B cell (primary cell): ENCODE measurements at regions of chr9 and their contacts with region 1.

Region 1: DNA sequence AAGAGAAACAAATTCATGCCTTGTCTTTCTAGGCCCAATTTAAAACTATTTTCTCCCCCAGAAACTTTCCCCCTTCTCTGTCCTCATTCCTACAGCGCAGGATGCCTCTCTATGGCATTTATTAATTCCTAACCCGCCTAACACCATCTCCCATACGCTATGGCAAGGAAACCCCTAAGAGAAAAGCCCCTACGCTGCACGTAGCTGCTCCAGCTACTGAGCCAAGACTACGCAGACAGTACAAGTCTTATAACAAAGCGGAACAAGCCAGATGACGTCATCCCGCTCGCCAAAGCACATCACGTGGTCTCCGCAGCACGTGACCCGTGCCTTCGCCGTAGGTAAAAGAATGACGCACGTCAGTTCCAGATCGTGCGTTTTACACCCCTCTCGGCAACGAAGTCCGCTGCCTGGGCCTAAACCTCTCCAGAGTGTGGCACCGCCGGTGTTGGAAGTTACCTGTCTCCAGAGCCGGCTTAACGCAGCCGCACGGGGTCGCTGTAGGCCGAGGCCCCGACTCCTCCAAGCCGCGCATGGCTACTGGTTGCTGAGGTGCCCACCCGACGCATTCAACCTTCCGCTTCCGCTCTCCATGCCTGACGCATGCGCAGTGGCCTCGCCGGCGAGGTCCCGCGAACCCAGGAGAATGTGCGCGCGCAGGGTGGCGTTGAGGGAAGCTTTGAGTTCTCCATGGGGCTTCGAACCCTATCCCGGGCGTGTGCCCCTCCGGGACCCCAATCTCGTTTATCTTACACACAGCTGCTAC is at the start of gene TRMO:
- DNase-seq: peak; percentile 100
- ATAC-seq: peak; percentile 78
- H3K4me3 ChIP-seq: peak within 1 kb of the TSS; percentile 47 to 89 (median 77)
- H3K4me3 Mint-ChIP-seq: peak within 1 kb of the TSS; percentile 87
- H3K27ac ChIP-seq: peak within 1 kb of the TSS; percentile 98 to 99
- H3K27ac Mint-ChIP-seq: peak within 1 kb of the TSS; percentile 97
- H3K4me1 ChIP-seq: peaks cover 26 to 32% of the 10 kb centered on the region in 2 donors
- H3K4me1 Mint-ChIP-seq: peaks cover 54% of the 10 kb centered on the region
- H3K27me3 ChIP-seq: no peaks in the 10 kb centered on the region
- H3K27me3 Mint-ChIP-seq: no peaks in the 10 kb centered on the region
- CTCF ChIP-seq: peak; percentile 74
- total RNA-seq, gene TRMO: 40.2 and 42.3 TPM in 2 replicates

Region 2: GRCh38 chr9:97696803-97697601 is 225.1 kb before region 1 on chr9 and contains the start of gene XPA:
- CTCF ChIA-PET with region 1: interaction called, 3 read pairs
- POLR2A ChIA-PET with region 1: interaction called, 4 read pairs
- intact Hi-C with region 1: loop called (anchors 1 kb)
- DNase-seq: peak; percentile 97
- ATAC-seq: peak; percentile 92
- H3K4me3 ChIP-seq: peak within 1 kb of the TSS; percentile 67 to 84 (median 74)
- H3K4me3 Mint-ChIP-seq: peak within 1 kb of the TSS; percentile 91
- H3K27ac ChIP-seq: peak within 1 kb of the TSS; percentile 77 to 82
- H3K27ac Mint-ChIP-seq: peak within 1 kb of the TSS; percentile 94
- H3K4me1 ChIP-seq: peaks cover 30 to 40% of the 10 kb centered on the region in 2 donors
- H3K4me1 Mint-ChIP-seq: peaks cover 59% of the 10 kb centered on the region
- H3K27me3 ChIP-seq: no peaks in the 10 kb centered on the region
- H3K27me3 Mint-ChIP-seq: peaks cover 7% of the 10 kb centered on the region
- CTCF ChIP-seq: no peak
- total RNA-seq, gene XPA: 21.3 and 27.4 TPM in 2 replicates

Region 3: DNA sequence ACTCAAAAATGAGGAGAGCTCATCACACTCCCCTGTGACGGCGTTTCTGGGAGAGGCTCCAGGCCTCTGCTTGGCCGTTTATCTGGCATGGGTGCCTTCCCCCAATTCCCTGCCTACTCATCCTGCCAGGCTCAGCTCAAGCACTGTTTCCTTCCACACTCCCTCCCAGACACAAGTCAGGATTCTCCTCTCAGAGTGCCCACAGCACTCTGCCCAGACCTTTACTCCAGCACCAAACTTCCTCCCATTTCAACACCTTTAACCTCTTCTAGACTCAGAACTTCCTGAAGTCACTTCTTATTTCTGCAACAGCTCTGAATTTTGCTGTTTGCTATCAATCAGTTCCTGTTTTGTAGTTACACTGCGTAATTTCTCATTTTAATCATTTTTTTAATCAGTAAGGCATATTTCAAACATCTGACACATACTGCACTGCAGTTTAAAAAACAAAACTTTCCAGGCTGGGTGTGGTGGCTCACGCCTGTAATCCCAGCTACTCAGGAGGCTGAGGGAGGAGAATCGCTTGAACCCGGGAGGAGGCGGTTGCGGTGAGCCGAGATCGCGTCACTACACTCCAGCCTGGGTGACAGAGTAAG is 15.8 kb before region 1 on chr9:
- CTCF ChIA-PET with region 1: interaction called, 24 read pairs
- POLR2A ChIA-PET with region 1: no interaction called
- intact Hi-C with region 1: no loop called
- DNase-seq: peak; percentile 52
- ATAC-seq: peak; percentile 55
- H3K4me3 ChIP-seq: peak overlapping the region in 3 of 5 experiments; percentile 5 to 12 (median 8)
- H3K4me3 Mint-ChIP-seq: peak overlapping the region; percentile 82
- H3K27ac ChIP-seq: peak overlapping the region; percentile 59 to 64
- H3K27ac Mint-ChIP-seq: peak overlapping the region; percentile 91
- H3K4me1 ChIP-seq: peaks cover 20 to 32% of the 10 kb centered on the region in 2 donors
- H3K4me1 Mint-ChIP-seq: peaks cover 47% of the 10 kb centered on the region
- H3K27me3 ChIP-seq: no peaks in the 10 kb centered on the region
- H3K27me3 Mint-ChIP-seq: no peaks in the 10 kb centered on the region
- CTCF ChIP-seq: no peak

Region 4: DNA sequence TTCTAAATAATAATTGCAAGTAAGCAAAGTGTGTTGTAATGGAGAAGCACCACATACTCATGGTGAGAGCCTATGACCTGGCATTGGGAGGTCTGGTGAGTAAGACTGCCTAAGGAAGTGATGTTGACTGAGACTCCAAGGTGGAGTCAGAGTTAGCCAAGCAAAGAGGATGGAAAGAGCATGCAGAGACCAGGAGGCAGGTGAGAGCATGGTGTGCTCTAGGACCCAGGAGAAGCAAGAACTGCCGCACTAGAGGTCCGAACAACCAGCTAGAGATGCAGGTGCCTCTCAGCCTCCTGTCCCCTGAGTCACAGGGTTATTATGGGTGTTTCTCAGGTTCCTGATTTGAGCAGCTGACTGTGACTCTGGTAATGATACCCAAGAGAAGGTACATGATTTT is 88.3 kb after region 1 on chr9:
- CTCF ChIA-PET with region 1: interaction called, 6 read pairs
- POLR2A ChIA-PET with region 1: interaction called, 6 read pairs
- intact Hi-C with region 1: loop called (anchors 1 kb)
- DNase-seq: peak; percentile 71
- ATAC-seq: peak; percentile 97
- H3K4me3 ChIP-seq: no peak overlapping the region
- H3K4me3 Mint-ChIP-seq: no peak overlapping the region
- H3K27ac ChIP-seq: peak overlapping the region; percentile 10 to 16
- H3K27ac Mint-ChIP-seq: peak overlapping the region; percentile 76
- H3K4me1 ChIP-seq: peaks cover 9 to 13% of the 10 kb centered on the region in 2 donors
- H3K4me1 Mint-ChIP-seq: peaks cover 23% of the 10 kb centered on the region
- H3K27me3 ChIP-seq: no peaks in the 10 kb centered on the region
- H3K27me3 Mint-ChIP-seq: no peaks in the 10 kb centered on the region
- CTCF ChIP-seq: no peak

Region 5: GRCh38 chr9:98108531-98109031 is 186.4 kb after region 1 on chr9:
- CTCF ChIA-PET with region 1: interaction called, 4 read pairs
- POLR2A ChIA-PET with region 1: no interaction called
- intact Hi-C with region 1: loop called (anchors 5 kb)
- DNase-seq: peak; percentile 93
- ATAC-seq: peak; percentile 83
- H3K4me3 ChIP-seq: peak overlapping the region in 1 of 5 experiments; percentile 18
- H3K4me3 Mint-ChIP-seq: peak overlapping the region; percentile 88
- H3K27ac ChIP-seq: peak overlapping the region; percentile 87 to 91
- H3K27ac Mint-ChIP-seq: peak overlapping the region; percentile 100
- H3K4me1 ChIP-seq: peaks cover 58 to 64% of the 10 kb centered on the region in 2 donors
- H3K4me1 Mint-ChIP-seq: peaks cover 60% of the 10 kb centered on the region
- H3K27me3 ChIP-seq: no peaks in the 10 kb centered on the region
- H3K27me3 Mint-ChIP-seq: no peaks in the 10 kb centered on the region
- CTCF ChIP-seq: no peak

Region 6: DNA sequence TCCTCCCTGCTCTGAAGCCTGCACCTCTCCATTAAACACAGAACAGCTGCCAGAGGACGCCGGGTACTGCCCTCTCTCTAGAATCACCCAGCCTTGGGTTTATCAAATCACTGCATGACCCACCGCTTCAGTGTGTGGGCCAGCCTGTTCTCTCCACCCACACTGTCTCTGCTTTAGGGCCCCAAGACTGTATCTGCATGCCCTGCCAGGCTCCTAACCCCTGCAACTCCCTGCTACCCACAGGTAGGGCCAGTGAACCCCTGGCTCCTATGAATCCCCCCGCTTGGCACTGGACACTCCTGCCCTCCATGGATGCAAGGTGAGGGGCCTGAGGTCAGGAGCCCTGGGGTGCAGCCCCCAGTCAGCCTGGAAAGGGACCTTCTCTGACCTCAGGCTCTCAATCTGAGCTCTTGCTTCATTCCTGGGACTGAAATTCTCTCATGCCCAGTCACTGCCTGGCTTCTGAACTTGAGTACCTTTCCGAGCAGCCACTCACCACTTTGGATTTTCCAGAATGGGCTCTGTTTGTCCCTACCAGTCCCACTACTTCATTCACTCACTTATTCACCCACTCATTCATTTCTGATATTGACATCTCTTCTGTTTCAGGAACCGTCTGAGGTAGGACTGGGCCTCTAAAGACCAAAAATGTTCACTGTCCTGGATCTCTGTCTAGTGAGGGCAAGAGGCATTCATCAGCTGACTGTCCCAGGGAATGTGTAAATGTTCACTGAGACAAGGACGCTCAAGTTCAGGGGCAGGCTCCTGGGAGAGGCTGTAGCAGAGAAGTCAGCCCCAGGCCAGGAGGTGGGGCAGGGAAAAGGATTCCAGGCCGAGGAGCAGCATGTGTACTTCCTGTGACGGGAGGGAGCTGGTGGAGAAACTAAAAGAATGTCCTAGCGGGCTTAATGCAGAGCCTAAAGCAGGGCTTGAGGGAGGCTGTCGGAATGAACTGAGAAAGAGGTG is 580.5 kb after region 1 on chr9:
- CTCF ChIA-PET with region 1: no interaction called
- POLR2A ChIA-PET with region 1: no interaction called
- intact Hi-C with region 1: no loop called
- DNase-seq: no peak
- ATAC-seq: no peak
- H3K4me3 ChIP-seq: no peak overlapping the region
- H3K4me3 Mint-ChIP-seq: no peak overlapping the region
- H3K27ac ChIP-seq: no peak overlapping the region
- H3K27ac Mint-ChIP-seq: no peak overlapping the region
- H3K4me1 ChIP-seq: no peaks in the 10 kb centered on the region
- H3K4me1 Mint-ChIP-seq: no peaks in the 10 kb centered on the region
- H3K27me3 ChIP-seq: peaks cover 0 to 12% (median 0%) of the 10 kb centered on the region in 4 experiments
- H3K27me3 Mint-ChIP-seq: peaks cover 15% of the 10 kb centered on the region
- CTCF ChIP-seq: no peak

Region 7: GRCh38 chr9:98796364-98797101 is 874.4 kb after region 1 on chr9 and contains the start of gene ANKS6:
- CTCF ChIA-PET with region 1: no interaction called
- POLR2A ChIA-PET with region 1: no interaction called
- intact Hi-C with region 1: loop called (anchors 2 kb)
- DNase-seq: peak; percentile 88
- ATAC-seq: peak; percentile 93
- H3K4me3 ChIP-seq: peak within 1 kb of the TSS; percentile 35 to 93 (median 78)
- H3K4me3 Mint-ChIP-seq: peak within 1 kb of the TSS; percentile 88
- H3K27ac ChIP-seq: peak within 1 kb of the TSS; percentile 38 to 68
- H3K27ac Mint-ChIP-seq: peak within 1 kb of the TSS; percentile 68
- H3K4me1 ChIP-seq: peaks cover 10 to 13% of the 10 kb centered on the region in 2 donors
- H3K4me1 Mint-ChIP-seq: peaks cover 23% of the 10 kb centered on the region
- H3K27me3 ChIP-seq: no peaks in the 10 kb centered on the region
- H3K27me3 Mint-ChIP-seq: no peaks in the 10 kb centered on the region
- CTCF ChIP-seq: peak; percentile 45
- total RNA-seq, gene ANKS6: 15.1 and 16.1 TPM in 2 replicates